Posterior cingulate gyrus (tissue), 11 donors: ENCODE measurements at regions of chr19 and their contacts with region 1.

Region 1: DNA sequence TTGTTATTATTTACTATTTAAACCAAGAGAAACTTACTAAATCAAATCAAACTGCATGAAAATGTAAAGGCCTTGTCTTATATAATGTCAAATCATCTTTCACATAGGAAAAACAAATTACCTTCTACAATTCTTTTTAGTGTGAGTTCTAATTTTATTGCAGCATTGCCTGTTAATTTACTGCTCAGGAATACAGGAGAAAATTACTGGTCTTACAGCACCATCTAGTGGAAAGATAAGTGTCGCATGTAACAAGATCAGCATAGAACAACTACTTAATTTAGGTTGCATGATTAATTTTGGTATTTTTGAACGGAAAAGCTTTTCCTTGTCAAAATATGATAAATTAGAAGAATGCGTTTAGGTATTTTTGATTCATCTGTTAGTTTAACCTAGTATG is 502.7 kb downstream of the UQCRFS1 start:
- DNase-seq: no peak

Region 2: GRCh38 chr19:27974082-27974513 is 736.2 kb before region 1 on chr19:
- intact Hi-C with region 1: loop called (anchors 2 kb)
- DNase-seq: peak; percentile 21 to 92 (median 54)